ENCODE measurements at regions of chr1 and their contacts with region 1.

Region 1: DNA sequence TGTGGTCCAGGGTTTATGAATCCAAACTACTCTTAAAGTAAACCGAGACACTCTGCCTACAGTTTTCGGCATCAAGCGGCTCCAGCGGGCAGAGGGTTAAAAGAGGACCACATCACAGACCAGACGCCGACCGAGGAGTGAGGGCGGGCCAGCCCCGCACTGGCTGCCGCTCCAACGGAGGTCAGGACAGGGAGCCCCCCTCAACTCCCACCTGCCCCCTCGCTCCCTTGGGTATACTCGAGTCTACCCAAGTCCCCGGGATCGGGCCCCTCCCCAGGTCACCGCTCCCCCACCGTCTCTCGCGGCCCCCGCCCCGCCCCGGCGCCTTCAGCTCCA is 312 bp downstream of the ARNT start:
- DNase-seq: peak; percentile 82
- ATAC-seq: peak; percentile 60

Region 2: DNA sequence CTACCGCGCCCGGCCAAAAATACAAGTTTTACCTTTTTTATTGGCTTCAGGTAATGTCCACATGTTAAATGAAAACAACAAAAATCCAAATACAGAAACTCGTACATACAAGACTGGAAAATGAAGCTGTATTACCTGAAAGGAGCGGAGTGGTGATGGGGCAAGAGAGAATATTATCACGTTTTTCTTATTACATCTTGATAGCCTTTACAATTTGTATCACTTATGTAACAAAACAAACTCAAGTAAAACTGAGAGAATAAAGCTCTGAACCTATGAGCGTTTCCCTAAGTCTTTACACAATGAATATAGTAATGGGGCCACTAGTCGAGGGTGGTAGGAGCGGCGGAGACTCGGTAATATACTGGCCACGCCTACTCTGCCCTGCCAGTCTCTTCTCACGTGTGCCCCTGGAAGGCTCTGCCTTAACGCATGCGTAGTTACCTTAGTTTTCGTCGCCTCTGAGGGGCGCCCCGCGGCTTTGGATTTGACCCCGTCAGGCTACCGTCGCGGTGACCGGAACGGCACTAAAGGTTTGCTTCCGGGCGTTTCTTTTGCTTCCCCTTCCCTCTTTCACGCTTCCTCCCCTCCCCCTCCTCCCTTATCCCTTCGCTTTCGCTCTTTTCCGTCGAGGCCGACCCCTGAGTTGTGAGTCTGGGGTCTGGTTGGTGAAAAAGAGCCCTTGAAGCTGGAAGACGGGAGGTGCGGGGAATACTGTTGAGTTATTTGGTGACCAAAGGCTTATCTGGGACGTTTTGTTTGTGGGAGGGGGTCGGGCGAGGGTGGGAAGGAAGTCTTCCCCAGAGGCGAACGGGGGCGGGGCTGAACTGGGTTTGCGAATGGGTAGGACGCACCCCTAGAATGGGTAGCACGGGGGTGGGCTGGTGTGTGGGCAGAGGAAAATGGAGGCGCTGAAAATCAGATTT is 50.0 kb after region 1 on chr1 and contains the start of gene SETDB1:
- intact Hi-C with region 1: loop called (anchors 5 kb)
- DNase-seq: peak; percentile 97
- ATAC-seq: peak; percentile 99
- total RNA-seq, gene SETDB1: 16.2 TPM

Measured in Right ventricle myocardium inferior (tissue), 1 donor.